Natural killer cell (primary cell): ENCODE measurements at regions of chr1 and their contacts with region 1.

Region 1: GRCh38 chr1:13748610-13749505 is 48.9 kb downstream of the PRDM2 start:
- DNase-seq: peak; percentile 96 to 98
- ATAC-seq: peak; percentile 84 to 95 (median 87)
- H3K4me3 ChIP-seq: peak overlapping the region; percentile 76
- H3K4me3 Mint-ChIP-seq: peak overlapping the region; percentile 91
- H3K27ac ChIP-seq: peak overlapping the region; percentile 92
- H3K27ac Mint-ChIP-seq: peak overlapping the region; percentile 92
- H3K4me1 ChIP-seq: peaks cover 17% of the 10 kb centered on the region
- H3K4me1 Mint-ChIP-seq: peaks cover 48 to 57% of the 10 kb centered on the region in 2 donors
- H3K27me3 ChIP-seq: no peaks in the 10 kb centered on the region
- H3K27me3 Mint-ChIP-seq: no peaks in the 10 kb centered on the region
- CTCF ChIP-seq: no peak

Region 2: DNA sequence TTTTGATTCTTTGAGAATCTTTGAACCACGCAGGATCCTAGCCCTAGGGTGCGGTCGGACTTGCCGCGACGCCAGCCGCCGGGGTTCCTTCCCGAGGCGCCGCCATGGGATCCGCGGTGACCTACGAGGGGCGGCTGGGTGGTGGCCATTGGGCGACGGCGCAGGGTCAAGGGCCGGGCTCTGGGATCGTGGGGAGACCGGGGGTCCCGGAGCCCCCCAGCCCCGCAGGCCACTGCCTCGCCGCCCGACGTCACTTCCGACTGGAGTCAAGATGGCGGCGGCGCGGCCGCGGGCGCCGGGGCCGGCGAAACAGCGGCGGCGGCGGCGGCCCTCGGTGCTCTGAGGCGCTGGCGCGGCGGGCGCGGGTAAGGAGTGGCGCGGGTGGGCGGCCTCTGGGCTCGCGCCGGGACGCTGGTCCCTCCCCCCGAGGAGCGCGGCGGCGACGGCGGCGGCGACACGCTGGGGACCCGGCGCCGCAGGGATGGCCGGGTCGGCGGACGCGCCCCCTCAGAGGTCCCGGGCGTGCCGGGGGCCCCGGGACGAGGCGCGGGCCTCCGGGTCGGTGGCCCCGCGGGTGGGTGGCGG is 48.8 kb before region 1 on chr1 and contains the start of gene PRDM2:
- intact Hi-C with region 1: loop called (anchors 5 kb)
- DNase-seq: peak; percentile 66 to 83
- ATAC-seq: peak; percentile 57 to 72 (median 71)
- H3K4me3 ChIP-seq: peak within 1 kb of the TSS; percentile 71
- H3K4me3 Mint-ChIP-seq: peak within 1 kb of the TSS; percentile 94
- H3K27ac ChIP-seq: peak within 1 kb of the TSS; percentile 97
- H3K27ac Mint-ChIP-seq: peak within 1 kb of the TSS; percentile 85 to 96
- H3K4me1 ChIP-seq: peaks cover 18% of the 10 kb centered on the region
- H3K4me1 Mint-ChIP-seq: peaks cover 31 to 34% of the 10 kb centered on the region in 2 donors
- H3K27me3 ChIP-seq: no peaks in the 10 kb centered on the region
- H3K27me3 Mint-ChIP-seq: peaks cover 0 to 4% of the 10 kb centered on the region in 2 donors
- CTCF ChIP-seq: no peak
- total RNA-seq, gene PRDM2: 168 to 193 (median 184) TPM

Region 3: GRCh38 chr1:14003552-14003951 is 254.7 kb after region 1 on chr1:
- intact Hi-C with region 1: no loop called
- DNase-seq: no peak
- ATAC-seq: no peak
- H3K4me3 ChIP-seq: no peak overlapping the region
- H3K4me3 Mint-ChIP-seq: no peak overlapping the region
- H3K27ac ChIP-seq: no peak overlapping the region
- H3K27ac Mint-ChIP-seq: no peak overlapping the region
- H3K4me1 ChIP-seq: no peaks in the 10 kb centered on the region
- H3K4me1 Mint-ChIP-seq: no peaks in the 10 kb centered on the region
- H3K27me3 ChIP-seq: no peaks in the 10 kb centered on the region
- H3K27me3 Mint-ChIP-seq: peaks cover 6 to 18% of the 10 kb centered on the region in 2 donors
- CTCF ChIP-seq: no peak

Region 4: GRCh38 chr1:14098294-14098913 is 349.5 kb after region 1 on chr1:
- intact Hi-C with region 1: no loop called
- DNase-seq: no peak
- ATAC-seq: no peak
- H3K4me3 ChIP-seq: no peak overlapping the region
- H3K4me3 Mint-ChIP-seq: no peak overlapping the region
- H3K27ac ChIP-seq: no peak overlapping the region
- H3K27ac Mint-ChIP-seq: no peak overlapping the region
- H3K4me1 ChIP-seq: no peaks in the 10 kb centered on the region
- H3K4me1 Mint-ChIP-seq: no peaks in the 10 kb centered on the region
- H3K27me3 ChIP-seq: no peaks in the 10 kb centered on the region
- H3K27me3 Mint-ChIP-seq: peaks cover 16 to 51% of the 10 kb centered on the region in 2 donors
- CTCF ChIP-seq: no peak

Region 5: DNA sequence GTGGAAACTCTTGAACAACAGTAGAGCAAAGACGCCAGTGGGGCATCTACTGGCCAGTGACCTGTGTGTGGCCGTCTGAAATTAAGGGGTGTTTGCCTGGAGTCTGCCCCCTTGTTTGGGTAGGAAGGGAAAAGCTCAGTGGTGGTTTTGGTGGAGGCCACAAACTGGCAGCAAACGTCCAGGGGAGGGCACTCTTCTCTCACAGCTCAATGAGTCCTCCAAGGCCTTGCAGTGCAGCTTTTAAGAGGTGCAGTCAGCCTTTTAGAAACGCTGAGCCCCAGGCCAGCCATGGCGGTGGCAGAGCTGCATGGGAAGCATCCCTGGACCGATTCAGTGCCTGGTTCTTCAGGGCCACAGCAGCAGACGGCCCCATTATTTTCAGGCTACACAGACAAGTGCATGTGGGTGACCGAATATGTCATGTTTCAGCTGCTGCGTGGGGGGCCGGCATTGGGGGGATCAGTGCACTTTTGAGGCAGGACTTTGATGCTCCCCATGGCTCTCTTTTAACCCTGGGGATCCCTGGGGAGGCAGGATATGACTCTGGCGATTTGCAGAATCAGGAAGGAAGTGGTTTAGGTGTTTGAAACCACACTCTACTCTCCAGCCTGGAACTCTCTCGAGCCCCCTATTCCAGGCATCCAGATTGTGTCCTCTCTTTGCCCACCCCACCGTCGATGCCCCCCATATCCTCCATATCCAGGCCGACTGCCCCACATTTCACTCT is 365.1 kb after region 1 on chr1:
- intact Hi-C with region 1: no loop called
- DNase-seq: peak in 1 of 2 donors; percentile 9
- ATAC-seq: no peak
- H3K4me3 ChIP-seq: no peak overlapping the region
- H3K4me3 Mint-ChIP-seq: no peak overlapping the region
- H3K27ac ChIP-seq: no peak overlapping the region
- H3K27ac Mint-ChIP-seq: no peak overlapping the region
- H3K4me1 ChIP-seq: peaks cover 4% of the 10 kb centered on the region
- H3K4me1 Mint-ChIP-seq: peaks cover 11 to 12% of the 10 kb centered on the region in 2 donors
- H3K27me3 ChIP-seq: no peaks in the 10 kb centered on the region
- H3K27me3 Mint-ChIP-seq: peaks cover 13 to 28% of the 10 kb centered on the region in 2 donors
- CTCF ChIP-seq: no peak